Left ventricle myocardium inferior (tissue), 1 donor: ENCODE measurements at regions of chr1 and their contacts with region 1.

Region 1: DNA sequence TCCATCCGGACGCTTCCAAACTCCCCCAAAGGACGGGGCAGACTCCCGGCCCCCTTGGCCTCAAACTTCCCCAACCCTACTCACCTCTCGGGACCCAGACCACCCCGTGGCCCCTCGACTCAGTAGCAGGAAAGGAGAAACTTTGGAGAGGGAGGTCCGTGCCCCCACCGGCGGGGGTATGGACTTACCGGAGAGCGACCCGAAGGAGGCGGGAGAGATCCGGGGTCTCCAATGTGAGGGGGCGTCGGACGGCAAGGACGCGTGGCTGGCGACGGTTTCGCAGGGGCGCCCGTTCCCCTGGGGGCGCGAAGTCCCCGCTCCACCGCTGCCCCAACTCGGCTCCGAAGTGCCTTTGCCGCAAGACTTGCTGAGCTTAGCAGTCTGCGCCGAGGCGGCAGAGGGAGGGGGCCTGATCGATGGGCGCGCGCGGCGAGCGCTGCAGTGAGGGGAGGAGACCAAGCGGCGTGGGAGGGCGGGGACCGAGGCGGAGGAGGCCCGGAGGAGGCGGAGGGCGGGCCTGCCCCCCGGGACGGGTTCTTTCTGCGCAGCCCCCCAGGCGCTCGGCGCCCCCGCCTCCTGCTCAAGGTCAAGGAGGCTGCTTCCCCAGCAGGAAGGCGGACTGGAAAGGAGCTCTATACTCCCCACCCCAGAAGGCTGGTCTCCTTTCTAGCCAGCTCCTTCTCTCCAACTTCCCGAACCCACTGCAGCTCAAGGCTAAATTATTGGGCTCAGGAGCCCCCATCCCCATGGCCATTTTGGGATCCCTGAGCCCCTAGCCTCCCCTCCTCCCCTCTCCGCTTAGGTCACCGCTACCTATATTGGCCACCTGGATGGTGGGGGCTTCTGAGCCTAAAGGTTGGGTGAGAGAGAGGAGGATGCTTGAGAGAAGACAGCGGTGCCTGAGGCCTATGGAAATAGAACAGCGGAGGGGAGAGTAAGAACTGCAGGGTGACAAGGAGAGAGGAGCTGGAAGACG is at the start of gene SYT2:
- DNase-seq: peak; percentile 20
- H3K4me3 ChIP-seq: peak within 1 kb of the TSS; percentile 56
- H3K27ac ChIP-seq: no peak within 1 kb of the TSS
- H3K4me1 ChIP-seq: peaks cover 18% of the 10 kb centered on the region
- H3K27me3 ChIP-seq: peaks cover 66% of the 10 kb centered on the region
- CTCF ChIP-seq: no peak
- total RNA-seq, gene SYT2: not detected

Region 2: DNA sequence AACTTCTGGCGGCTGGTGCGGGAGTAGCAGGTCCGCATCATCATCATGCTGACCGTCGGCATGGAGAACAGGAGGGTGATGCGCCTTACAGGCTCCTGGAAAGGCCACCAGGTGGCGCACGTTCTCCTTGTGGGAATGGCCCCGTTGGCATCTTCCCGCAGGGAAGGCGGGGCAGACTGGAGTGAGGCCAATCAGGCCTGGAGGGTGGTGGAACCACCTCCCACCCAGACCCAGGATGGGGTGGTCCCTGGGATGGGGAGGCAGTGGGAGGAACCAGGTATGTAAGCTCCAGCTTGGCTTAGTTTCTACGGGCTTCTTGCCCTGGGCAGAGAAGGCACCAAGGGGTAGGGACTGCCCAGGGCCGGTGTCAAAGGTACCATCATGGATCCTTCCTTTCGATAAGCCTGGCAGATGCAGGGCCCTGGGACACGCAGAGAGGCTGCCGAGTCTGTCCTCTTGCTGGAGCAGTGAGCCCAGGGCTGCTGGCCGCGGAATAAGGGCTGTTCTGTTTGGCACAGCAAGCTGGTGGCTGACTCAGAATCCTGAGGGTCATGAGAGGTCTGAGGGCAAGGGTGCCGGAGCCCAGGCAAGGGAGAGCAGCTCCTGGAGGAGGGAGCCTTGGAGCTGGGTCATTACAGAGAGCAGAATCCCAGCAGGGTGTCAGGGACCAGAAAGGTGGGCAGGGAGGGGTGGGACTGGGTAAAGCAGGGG is 525.5 kb before region 1 on chr1:
- intact Hi-C with region 1: loop called (anchors 10 kb)
- DNase-seq: peak; percentile 76
- H3K4me3 ChIP-seq: no peak overlapping the region
- H3K27ac ChIP-seq: no peak overlapping the region
- H3K4me1 ChIP-seq: no peaks in the 10 kb centered on the region
- H3K27me3 ChIP-seq: peaks cover 54% of the 10 kb centered on the region
- CTCF ChIP-seq: peak; percentile 86

Region 3: DNA sequence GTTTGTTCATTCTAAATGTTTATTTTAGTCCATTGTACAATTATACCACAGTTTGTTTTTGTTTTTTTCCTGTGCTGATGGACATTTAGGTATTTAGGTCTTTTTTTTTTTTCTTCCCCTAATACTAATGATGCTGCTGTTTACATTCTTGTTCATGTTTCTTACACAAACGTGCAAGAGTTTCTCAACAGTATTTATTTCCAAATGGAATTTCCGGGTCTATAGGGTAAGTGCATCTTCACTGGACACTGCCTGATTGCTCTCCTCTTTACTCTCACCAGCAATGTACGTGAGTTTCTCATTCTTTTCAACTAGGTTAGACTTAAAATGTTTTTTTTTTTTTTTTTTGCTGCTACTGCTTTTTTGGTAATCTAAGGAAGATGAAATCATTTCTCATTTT is 239.1 kb before region 1 on chr1:
- intact Hi-C with region 1: loop called (anchors 10 kb)
- DNase-seq: no peak
- H3K4me3 ChIP-seq: peak overlapping the region; percentile 47
- H3K27ac ChIP-seq: peak overlapping the region; percentile 82
- H3K4me1 ChIP-seq: peaks cover 44% of the 10 kb centered on the region
- H3K27me3 ChIP-seq: no peaks in the 10 kb centered on the region
- CTCF ChIP-seq: no peak